GM10248 (cell line): ENCODE measurements at regions of chr2 and their contacts with region 1.

Region 1: GRCh38 chr2:36068086-36068485 is 287.5 kb upstream of the CRIM1 start:
- DNase-seq: no peak
- CTCF ChIP-seq: no peak

Region 2: GRCh38 chr2:36079793-36080192 is 11.7 kb after region 1 on chr2:
- CTCF ChIA-PET with region 1: interaction called, 13 read pairs
- POLR2A ChIA-PET with region 1: no interaction called
- DNase-seq: no peak
- CTCF ChIP-seq: no peak

Region 3: DNA sequence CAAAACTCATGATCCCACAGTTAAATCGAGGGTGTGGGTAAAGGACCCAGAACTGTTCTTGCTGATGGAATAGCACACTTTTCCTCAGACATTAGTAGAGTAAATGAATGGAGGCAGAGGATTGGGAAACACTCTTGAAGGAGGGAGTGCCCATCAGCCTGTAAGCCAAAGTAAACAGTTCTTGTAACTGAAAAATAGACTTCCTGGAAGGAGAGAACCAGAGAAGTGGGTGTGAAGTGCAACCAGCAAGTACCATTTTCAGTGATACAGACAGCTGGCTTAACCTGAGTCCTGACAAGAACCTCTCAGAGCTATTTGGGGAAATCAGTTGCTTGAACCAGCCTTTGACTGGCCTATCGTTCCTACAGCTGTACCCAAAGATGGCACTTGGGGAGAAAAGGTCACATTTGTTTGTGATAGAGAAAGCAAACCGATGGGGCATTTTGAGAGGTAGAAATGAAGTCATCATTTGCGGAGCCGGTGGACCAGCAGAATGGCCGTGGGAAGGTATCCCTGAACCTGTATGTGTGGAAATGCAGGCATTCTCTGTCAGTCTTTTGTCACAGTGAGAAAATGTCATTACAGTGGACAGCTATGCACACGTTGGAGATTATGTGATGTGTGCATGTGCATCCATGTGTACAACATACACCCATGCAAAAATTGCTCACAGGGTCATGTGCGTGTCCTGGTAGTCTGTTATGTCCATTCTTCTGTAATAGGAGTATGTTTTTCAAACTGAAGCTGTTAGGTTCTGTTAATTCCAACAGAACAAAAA is 305.3 kb after region 1 on chr2:
- CTCF ChIA-PET with region 1: no interaction called
- POLR2A ChIA-PET with region 1: no interaction called
- DNase-seq: no peak
- CTCF ChIP-seq: no peak